ENCODE measurements at regions of chr4 and their contacts with region 1.

Region 1: DNA sequence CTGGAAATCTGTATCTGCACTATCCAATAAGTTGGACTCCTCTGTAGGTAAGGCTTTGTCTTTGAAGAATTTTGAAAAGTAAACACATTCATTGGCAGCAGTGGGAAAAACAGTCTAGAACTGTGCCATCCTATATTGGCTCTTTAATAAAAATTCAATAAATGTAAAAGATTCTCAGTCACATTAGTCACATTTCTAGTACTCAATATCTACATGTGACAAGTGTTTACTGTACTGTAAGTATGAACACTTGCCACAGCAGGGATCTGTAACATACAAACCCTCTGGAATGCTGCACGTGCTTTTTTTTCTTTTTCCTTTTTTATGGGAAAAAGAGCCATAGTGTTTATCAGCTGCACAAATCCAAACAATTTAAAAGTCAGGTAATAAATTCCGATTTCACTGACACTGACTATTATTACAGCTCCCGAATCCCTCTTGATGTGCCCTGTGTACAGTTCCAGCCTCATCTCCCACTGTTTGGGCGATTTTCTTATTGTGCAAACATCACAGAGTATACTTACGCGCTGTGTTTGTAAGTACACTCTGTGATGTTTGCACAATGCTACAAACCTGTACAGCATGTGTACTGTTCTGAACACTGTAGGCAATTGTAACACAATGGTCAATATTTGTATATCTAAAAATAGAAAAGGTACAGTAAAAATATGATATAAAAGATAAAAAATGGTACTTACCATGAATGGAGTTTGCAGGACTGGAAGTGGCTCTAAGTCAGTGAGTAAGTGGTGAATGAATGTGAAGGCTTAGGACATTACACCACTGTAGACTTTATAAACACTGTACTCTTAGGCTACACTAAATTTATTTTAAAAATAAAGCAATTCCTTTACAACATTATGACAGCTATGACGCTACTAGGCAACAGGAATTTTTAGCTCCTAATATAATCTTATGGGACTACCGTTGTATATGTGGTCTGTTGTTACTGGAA is 8.7 kb downstream of the PYURF start:
- DNase-seq: no peak
- H3K4me3 ChIP-seq: no peak overlapping the region
- H3K4me3 Mint-ChIP-seq: no peak overlapping the region
- H3K27ac Mint-ChIP-seq: no peak overlapping the region
- H3K4me1 ChIP-seq: no peaks in the 10 kb centered on the region
- H3K4me1 Mint-ChIP-seq: no peaks in the 10 kb centered on the region
- H3K27me3 ChIP-seq: no peaks in the 10 kb centered on the region
- H3K27me3 Mint-ChIP-seq: no peaks in the 10 kb centered on the region
- CTCF ChIP-seq: no peak

Region 2: GRCh38 chr4:88033309-88033708 is 481.5 kb before region 1 on chr4:
- CTCF ChIA-PET with region 1: interaction called, 5 read pairs
- POLR2A ChIA-PET with region 1: no interaction called
- intact Hi-C with region 1: loop called (anchors 1 kb)
- DNase-seq: peak; percentile 58 to 70
- H3K4me3 ChIP-seq: no peak overlapping the region
- H3K4me3 Mint-ChIP-seq: no peak overlapping the region
- H3K27ac Mint-ChIP-seq: no peak overlapping the region
- H3K4me1 ChIP-seq: no peaks in the 10 kb centered on the region
- H3K4me1 Mint-ChIP-seq: no peaks in the 10 kb centered on the region
- H3K27me3 ChIP-seq: no peaks in the 10 kb centered on the region
- H3K27me3 Mint-ChIP-seq: no peaks in the 10 kb centered on the region
- CTCF ChIP-seq: peak; percentile 68

Region 3: GRCh38 chr4:88070031-88070430 is 444.8 kb before region 1 on chr4:
- CTCF ChIA-PET with region 1: no interaction called
- POLR2A ChIA-PET with region 1: no interaction called
- intact Hi-C with region 1: no loop called
- DNase-seq: no peak
- H3K4me3 ChIP-seq: no peak overlapping the region
- H3K4me3 Mint-ChIP-seq: no peak overlapping the region
- H3K27ac Mint-ChIP-seq: no peak overlapping the region
- H3K4me1 ChIP-seq: peaks cover 14% of the 10 kb centered on the region
- H3K4me1 Mint-ChIP-seq: peaks cover 9% of the 10 kb centered on the region
- H3K27me3 ChIP-seq: no peaks in the 10 kb centered on the region
- H3K27me3 Mint-ChIP-seq: no peaks in the 10 kb centered on the region
- CTCF ChIP-seq: no peak

Region 4: GRCh38 chr4:88217169-88217568 is 297.7 kb before region 1 on chr4:
- CTCF ChIA-PET with region 1: interaction called, 74 read pairs
- POLR2A ChIA-PET with region 1: no interaction called
- intact Hi-C with region 1: loop called (anchors 1 kb)
- DNase-seq: peak; percentile 14 to 49
- H3K4me3 ChIP-seq: no peak overlapping the region
- H3K4me3 Mint-ChIP-seq: no peak overlapping the region
- H3K27ac Mint-ChIP-seq: no peak overlapping the region
- H3K4me1 ChIP-seq: peaks cover 10% of the 10 kb centered on the region
- H3K4me1 Mint-ChIP-seq: peaks cover 21% of the 10 kb centered on the region
- H3K27me3 ChIP-seq: no peaks in the 10 kb centered on the region
- H3K27me3 Mint-ChIP-seq: no peaks in the 10 kb centered on the region
- CTCF ChIP-seq: no peak

Region 5: DNA sequence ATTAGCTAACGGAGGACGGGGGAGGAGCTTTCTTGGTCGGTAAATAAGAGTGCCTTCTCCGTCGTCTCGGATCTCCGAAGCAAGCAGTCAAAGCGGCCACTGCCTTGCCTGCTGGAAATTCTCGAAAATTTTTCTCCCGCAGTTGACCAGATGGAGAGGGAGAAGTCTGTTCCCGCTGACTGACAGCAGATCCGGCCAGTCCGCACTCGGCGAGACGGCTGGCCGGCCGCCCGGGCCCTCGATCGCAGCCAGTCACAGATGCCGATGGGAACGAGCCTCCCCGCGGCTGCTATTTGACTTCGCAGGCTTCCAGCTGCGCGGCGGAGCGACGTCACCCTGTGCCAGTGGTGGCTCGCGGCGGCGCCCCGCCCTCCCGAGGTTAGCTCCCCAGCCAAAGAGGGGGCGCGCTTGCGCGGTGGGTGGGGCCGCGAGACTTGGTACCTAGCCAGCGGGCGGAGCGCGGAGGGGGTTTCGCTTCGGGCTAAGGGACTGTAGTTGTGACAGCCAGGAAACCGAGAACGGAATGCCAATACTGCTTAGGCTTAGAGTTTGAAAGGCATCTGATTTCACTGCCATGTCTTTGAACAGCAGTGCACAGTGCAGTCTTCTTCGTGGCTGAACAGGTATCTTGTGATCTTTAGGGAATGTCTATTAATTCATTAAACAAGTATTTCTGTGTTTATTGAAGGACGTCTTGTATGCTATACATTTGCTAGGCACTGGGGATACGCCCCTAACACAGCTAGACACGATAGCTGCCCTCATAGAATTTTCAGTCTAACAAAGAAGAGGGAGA is 230.2 kb before region 1 on chr4 and contains the start of gene PPM1K:
- CTCF ChIA-PET with region 1: interaction called, 7 read pairs
- POLR2A ChIA-PET with region 1: no interaction called
- intact Hi-C with region 1: loop called (anchors 1 kb)
- DNase-seq: peak; percentile 98 to 99
- H3K4me3 ChIP-seq: peak within 1 kb of the TSS; percentile 79
- H3K4me3 Mint-ChIP-seq: peak within 1 kb of the TSS; percentile 94
- H3K27ac Mint-ChIP-seq: peak within 1 kb of the TSS; percentile 95
- H3K4me1 ChIP-seq: peaks cover 30% of the 10 kb centered on the region
- H3K4me1 Mint-ChIP-seq: peaks cover 14% of the 10 kb centered on the region
- H3K27me3 ChIP-seq: no peaks in the 10 kb centered on the region
- H3K27me3 Mint-ChIP-seq: no peaks in the 10 kb centered on the region
- CTCF ChIP-seq: no peak
- total RNA-seq, gene PPM1K: 23.8 and 24.3 TPM in 2 replicates

Region 6: DNA sequence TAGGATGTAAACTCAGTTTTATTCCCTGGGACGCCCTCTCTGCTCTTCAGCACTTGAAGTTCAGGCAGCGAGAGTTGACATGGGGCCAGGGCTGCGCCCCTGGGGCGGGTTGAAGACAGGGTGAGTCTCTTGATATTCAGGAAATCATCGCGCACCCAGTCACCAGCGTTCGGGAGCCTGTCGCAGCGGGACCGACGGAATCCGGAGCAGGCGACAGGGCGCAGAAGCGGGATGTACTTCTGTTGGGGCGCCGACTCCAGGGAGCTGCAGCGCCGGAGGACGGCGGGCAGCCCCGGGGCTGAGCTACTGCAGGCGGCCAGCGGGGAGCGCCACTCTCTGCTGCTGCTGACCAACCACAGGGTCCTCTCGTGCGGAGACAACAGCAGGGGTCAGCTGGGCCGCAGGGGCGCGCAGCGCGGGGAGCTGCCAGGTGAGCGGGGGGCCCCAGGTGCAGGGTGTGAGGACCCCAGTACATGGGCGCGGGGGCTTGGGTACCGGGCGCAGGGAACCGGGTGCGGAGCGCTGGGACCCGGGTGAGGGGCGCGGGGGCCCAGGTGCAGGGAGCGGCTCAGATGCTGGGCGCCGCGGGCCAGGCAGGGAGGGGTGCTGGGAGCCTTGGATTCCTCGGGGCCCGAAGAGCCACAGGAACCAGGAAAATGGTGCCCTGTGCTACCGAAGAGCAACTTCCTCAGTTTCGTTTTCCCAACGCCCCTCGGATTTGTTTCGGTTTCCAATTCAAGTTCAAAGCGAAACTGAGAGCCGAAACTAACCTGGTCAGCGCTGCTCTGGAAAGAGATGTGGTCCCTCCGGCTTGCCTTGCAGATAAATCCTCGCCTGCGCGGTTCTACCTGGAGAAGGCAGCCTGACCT is 135.9 kb before region 1 on chr4 and contains the start of gene HERC6:
- CTCF ChIA-PET with region 1: interaction called, 9 read pairs
- POLR2A ChIA-PET with region 1: no interaction called
- intact Hi-C with region 1: loop called (anchors 1 kb)
- DNase-seq: peak; percentile 80 to 87
- H3K4me3 ChIP-seq: peak within 1 kb of the TSS; percentile 80
- H3K4me3 Mint-ChIP-seq: peak within 1 kb of the TSS; percentile 73
- H3K27ac Mint-ChIP-seq: peak within 1 kb of the TSS; percentile 37
- H3K4me1 ChIP-seq: no peaks in the 10 kb centered on the region
- H3K4me1 Mint-ChIP-seq: no peaks in the 10 kb centered on the region
- H3K27me3 ChIP-seq: no peaks in the 10 kb centered on the region
- H3K27me3 Mint-ChIP-seq: peaks cover 3% of the 10 kb centered on the region
- CTCF ChIP-seq: peak; percentile 60 to 73
- total RNA-seq, gene HERC6: 6.5 and 7.6 TPM in 2 replicates

Region 7: GRCh38 chr4:88419874-88420273 is 95.0 kb before region 1 on chr4:
- CTCF ChIA-PET with region 1: no interaction called
- POLR2A ChIA-PET with region 1: no interaction called
- intact Hi-C with region 1: no loop called
- DNase-seq: no peak
- H3K4me3 ChIP-seq: no peak overlapping the region
- H3K4me3 Mint-ChIP-seq: no peak overlapping the region
- H3K27ac Mint-ChIP-seq: no peak overlapping the region
- H3K4me1 ChIP-seq: peaks cover 11% of the 10 kb centered on the region; the same call in 1 of the 2 replicates
- H3K4me1 Mint-ChIP-seq: peaks cover 13% of the 10 kb centered on the region
- H3K27me3 ChIP-seq: no peaks in the 10 kb centered on the region
- H3K27me3 Mint-ChIP-seq: no peaks in the 10 kb centered on the region
- CTCF ChIP-seq: no peak

Region 8: DNA sequence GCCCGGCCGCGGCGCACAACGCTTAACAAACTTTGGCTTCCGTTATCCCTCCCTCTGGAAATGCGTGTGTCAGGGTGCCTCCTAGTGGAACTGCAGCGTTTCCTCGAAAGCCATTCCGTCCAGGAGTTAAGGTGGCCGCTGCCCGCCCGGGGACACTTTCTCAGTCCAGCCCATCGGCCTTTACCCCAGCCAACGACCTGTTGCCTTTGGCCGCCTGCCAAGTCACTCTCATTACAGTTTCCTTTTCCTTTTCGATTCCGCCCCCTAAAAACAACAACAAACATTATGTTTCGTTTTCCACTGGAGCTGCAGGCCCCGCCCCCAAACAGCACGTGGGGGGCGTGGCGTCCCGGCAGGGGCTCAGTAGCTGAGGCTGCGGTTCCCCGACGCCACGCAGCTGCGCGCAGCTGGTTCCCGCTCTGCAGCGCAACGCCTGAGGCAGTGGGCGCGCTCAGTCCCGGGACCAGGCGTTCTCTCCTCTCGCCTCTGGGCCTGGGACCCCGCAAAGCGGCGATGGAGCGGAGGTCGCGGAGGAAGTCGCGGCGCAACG is 58.0 kb before region 1 on chr4 and contains the start of gene HERC5:
- CTCF ChIA-PET with region 1: interaction called, 10 read pairs
- POLR2A ChIA-PET with region 1: no interaction called
- intact Hi-C with region 1: loop called (anchors 1 kb)
- DNase-seq: peak; percentile 88 to 90
- H3K4me3 ChIP-seq: peak within 1 kb of the TSS; percentile 50
- H3K4me3 Mint-ChIP-seq: peak within 1 kb of the TSS; percentile 87
- H3K27ac Mint-ChIP-seq: peak within 1 kb of the TSS; percentile 81
- H3K4me1 ChIP-seq: no peaks in the 10 kb centered on the region
- H3K4me1 Mint-ChIP-seq: no peaks in the 10 kb centered on the region
- H3K27me3 ChIP-seq: no peaks in the 10 kb centered on the region
- H3K27me3 Mint-ChIP-seq: peaks cover 3% of the 10 kb centered on the region
- CTCF ChIP-seq: peak; percentile 54 to 80
- total RNA-seq, gene HERC5: 5.6 and 6.8 TPM in 2 replicates